IMR-90 (cell line): ENCODE measurements at regions of chr1 and their contacts with region 1.

Region 1: DNA sequence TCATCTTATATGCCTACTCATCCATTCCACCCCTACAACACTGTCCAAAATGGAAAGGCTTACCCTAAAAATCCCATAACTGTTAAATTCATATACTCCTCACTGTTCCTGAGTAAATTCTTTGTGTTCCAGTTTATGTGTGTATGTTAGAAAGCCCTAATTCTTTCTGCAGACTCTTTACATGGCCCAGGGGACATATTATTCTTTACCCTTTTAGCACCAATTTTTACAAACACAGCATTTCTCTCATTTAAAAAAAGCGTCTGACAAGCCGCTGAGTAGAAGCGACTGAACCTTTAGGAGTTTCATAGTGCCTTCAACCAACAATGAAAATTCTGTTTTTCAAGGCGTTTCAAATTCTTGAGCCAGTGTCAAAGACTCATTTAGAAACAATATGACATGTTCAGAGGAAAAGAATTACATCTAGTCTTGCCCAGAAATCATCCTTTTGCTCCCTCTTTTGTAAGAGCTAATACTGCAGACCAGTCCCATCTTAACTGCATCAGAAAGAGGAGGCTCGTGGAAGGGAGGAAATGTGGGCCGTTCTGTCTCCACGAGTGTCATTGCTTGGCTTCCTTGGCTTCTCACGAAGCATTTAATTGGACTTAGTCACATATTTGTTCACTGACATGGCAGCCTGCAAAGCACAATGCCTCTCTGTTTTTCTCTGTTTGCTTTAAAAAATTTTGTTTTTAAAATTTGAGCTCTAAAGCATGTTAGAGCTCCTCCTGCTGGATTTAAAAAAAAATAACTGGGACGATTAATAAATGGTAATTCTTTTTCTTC is 21.3 kb upstream of the C1orf105 start:
- DNase-seq: peak; percentile 92
- ATAC-seq: peak; percentile 88
- H3K4me3 ChIP-seq: no peak overlapping the region
- H3K27ac ChIP-seq: peak overlapping the region; percentile 59; the same call in 1 of the 2 replicates
- H3K4me1 ChIP-seq: peaks cover 3% of the 10 kb centered on the region
- H3K27me3 ChIP-seq: no peaks in the 10 kb centered on the region
- CTCF ChIP-seq: peak; percentile 74
- POLR2A ChIP-seq: 0 out of 2 replicates have a peak, but pooled peaks have one; percentile 27
- RAD21 ChIP-seq: peak; percentile 82

Region 2: DNA sequence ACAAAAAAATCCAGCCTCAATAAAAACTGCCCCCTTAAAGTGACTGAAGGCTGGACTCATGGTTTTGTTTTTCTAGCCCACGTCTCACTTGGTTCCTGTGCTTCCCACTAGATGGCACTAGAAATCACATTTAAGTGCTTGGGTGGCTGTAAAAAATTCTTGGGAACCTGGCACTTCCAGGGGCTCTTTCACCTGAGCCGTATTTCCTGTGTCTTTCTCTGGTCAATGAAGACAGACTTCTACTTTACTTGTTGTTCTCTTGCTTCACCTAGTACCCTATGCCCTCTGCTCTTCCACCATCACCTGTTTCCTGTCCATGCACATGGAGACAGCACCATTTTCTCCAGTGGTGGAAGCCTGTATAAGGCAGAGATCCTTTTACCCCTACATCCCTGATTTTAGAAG is 597.7 kb before region 1 on chr1:
- CTCF ChIA-PET with region 1: interaction called, 4 read pairs
- POLR2A ChIA-PET with region 1: no interaction called
- dilution Hi-C with region 1: no loop called
- in situ Hi-C with region 1: loop called (anchors 25 kb)
- intact Hi-C with region 1: loop called (anchors 5 kb)
- DNase-seq: peak; percentile 51
- ATAC-seq: peak; percentile 65
- H3K4me3 ChIP-seq: no peak overlapping the region
- H3K27ac ChIP-seq: no peak overlapping the region
- H3K4me1 ChIP-seq: peaks cover 4% of the 10 kb centered on the region; the same call in 1 of the 2 replicates
- H3K27me3 ChIP-seq: no peaks in the 10 kb centered on the region
- CTCF ChIP-seq: peak; percentile 71
- POLR2A ChIP-seq: no peak
- RAD21 ChIP-seq: peak; percentile 71

Region 3: DNA sequence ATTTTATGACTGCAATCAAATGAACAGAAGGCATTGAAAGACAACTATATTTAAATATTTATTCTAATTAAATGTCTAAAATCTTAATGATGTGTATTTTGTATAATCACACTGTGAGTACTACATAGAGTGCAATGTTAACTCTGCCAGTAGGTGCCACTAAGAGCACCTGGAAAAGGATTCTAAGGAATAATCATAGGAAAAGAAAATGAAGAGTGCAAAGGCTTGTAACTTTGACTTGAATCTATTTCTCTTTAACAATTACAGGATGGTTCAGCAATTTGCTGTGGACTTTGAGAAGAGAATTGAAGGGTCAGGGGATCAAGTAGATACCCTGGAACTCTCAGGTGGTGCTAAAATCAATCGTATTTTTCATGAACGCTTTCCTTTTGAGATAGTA is 357.4 kb before region 1 on chr1:
- CTCF ChIA-PET with region 1: no interaction called
- POLR2A ChIA-PET with region 1: no interaction called
- dilution Hi-C with region 1: no loop called
- in situ Hi-C with region 1: no loop called
- intact Hi-C with region 1: loop called (anchors 1 kb)
- DNase-seq: peak; percentile 30
- ATAC-seq: peak; percentile 51; the same call in 1 of the 2 replicates
- H3K4me3 ChIP-seq: no peak overlapping the region
- H3K27ac ChIP-seq: no peak overlapping the region
- H3K4me1 ChIP-seq: peaks cover 2% of the 10 kb centered on the region
- H3K27me3 ChIP-seq: no peaks in the 10 kb centered on the region
- CTCF ChIP-seq: peak; percentile 61
- POLR2A ChIP-seq: no peak
- RAD21 ChIP-seq: peak; percentile 67

Region 4: DNA sequence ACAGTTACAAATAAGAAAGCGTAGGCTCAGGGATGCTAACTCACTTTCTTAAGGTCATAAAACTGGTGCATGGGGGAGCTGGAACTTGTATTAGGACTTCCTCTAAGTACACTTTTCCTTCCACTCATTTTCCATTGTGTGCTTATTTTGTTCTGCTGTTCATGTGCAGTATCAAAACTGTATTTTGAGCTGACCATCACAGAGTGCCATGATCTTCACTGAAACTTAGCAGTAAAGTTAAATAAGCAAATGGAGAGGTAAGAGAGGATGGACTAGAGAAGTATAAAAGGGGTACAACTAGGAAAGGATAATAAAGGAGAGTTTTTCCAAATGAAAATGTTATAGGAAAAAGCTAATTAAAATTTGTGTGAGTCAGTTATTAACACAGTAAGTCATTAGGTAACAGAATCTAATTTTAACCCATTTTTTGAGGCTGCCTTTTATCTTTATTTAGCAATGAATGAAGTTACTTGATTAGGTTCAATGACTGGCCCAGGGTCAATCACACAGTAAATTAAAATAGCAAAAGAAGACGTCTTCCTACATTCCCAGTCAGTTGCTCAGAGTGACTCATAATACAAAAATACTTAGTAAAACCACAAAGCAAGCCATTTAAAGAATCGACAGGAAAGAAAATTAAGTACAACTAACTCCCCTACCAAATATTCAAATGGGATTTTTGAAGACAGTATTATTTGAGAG is 144.5 kb before region 1 on chr1:
- CTCF ChIA-PET with region 1: no interaction called
- POLR2A ChIA-PET with region 1: no interaction called
- dilution Hi-C with region 1: no loop called
- in situ Hi-C with region 1: no loop called
- intact Hi-C with region 1: loop called (anchors 5 kb)
- DNase-seq: peak; percentile 92
- ATAC-seq: peak; percentile 94
- H3K4me3 ChIP-seq: no peak overlapping the region
- H3K27ac ChIP-seq: no peak overlapping the region
- H3K4me1 ChIP-seq: peaks cover 2% of the 10 kb centered on the region; the same call in 1 of the 2 replicates
- H3K27me3 ChIP-seq: no peaks in the 10 kb centered on the region
- CTCF ChIP-seq: no peak
- POLR2A ChIP-seq: no peak
- RAD21 ChIP-seq: no peak

Region 5: DNA sequence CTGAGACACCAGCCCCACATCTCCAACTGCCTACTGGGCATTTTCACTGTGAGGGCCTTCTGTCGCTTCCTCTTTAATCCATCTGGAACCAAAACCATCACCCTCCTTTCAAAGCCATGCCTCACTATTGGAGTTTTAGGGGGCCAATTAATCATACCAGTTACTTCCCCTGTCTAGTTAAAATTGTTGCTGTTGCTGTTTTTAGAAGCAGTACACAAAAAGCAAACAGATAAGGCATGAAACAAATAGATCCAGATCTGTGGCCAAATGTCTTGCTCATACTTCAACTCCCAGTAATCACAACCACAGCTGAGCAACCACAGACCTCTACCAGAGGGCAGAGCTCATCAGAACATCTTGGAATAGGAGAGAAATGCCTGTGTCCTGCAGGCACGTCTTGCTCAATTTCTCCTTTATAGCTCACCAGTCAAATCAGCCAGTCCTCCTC is 112.5 kb before region 1 on chr1:
- CTCF ChIA-PET with region 1: no interaction called
- POLR2A ChIA-PET with region 1: no interaction called
- dilution Hi-C with region 1: no loop called
- in situ Hi-C with region 1: no loop called
- intact Hi-C with region 1: loop called (anchors 2 kb)
- DNase-seq: peak; percentile 86
- ATAC-seq: peak; percentile 95
- H3K4me3 ChIP-seq: no peak overlapping the region
- H3K27ac ChIP-seq: no peak overlapping the region
- H3K4me1 ChIP-seq: no peaks in the 10 kb centered on the region
- H3K27me3 ChIP-seq: no peaks in the 10 kb centered on the region
- CTCF ChIP-seq: no peak
- POLR2A ChIP-seq: no peak
- RAD21 ChIP-seq: peak; percentile 13; the same call in 1 of the 2 replicates

Region 6: GRCh38 chr1:172357753-172358385 is 41.3 kb before region 1 on chr1:
- CTCF ChIA-PET with region 1: interaction called, 8 read pairs
- POLR2A ChIA-PET with region 1: no interaction called
- dilution Hi-C with region 1: no loop called
- in situ Hi-C with region 1: no loop called
- intact Hi-C with region 1: loop called (anchors 1 kb)
- DNase-seq: no peak
- ATAC-seq: no peak
- H3K4me3 ChIP-seq: no peak overlapping the region
- H3K27ac ChIP-seq: peak overlapping the region; percentile 57
- H3K4me1 ChIP-seq: peaks cover 10% of the 10 kb centered on the region
- H3K27me3 ChIP-seq: no peaks in the 10 kb centered on the region
- CTCF ChIP-seq: no peak
- POLR2A ChIP-seq: no peak
- RAD21 ChIP-seq: no peak

Region 7: GRCh38 chr1:172764378-172764777 is 365.2 kb after region 1 on chr1:
- CTCF ChIA-PET with region 1: no interaction called
- POLR2A ChIA-PET with region 1: no interaction called
- dilution Hi-C with region 1: no loop called
- in situ Hi-C with region 1: no loop called
- intact Hi-C with region 1: no loop called
- DNase-seq: no peak
- ATAC-seq: no peak
- H3K4me3 ChIP-seq: no peak overlapping the region
- H3K27ac ChIP-seq: no peak overlapping the region
- H3K4me1 ChIP-seq: peaks cover 2% of the 10 kb centered on the region; the same call in 1 of the 2 replicates
- H3K27me3 ChIP-seq: peaks cover 1% of the 10 kb centered on the region; the same call in 1 of the 2 replicates
- CTCF ChIP-seq: no peak
- POLR2A ChIP-seq: no peak
- RAD21 ChIP-seq: no peak